Endothelial cell of umbilical vein (primary cell): ENCODE measurements at regions of chr6 and their contacts with region 1.

Region 1: GRCh38 chr6:31795616-31796298 is at the start of gene VARS1:
- DNase-seq: peak; percentile 87
- H3K4me3 ChIP-seq: peak within 1 kb of the TSS; percentile 49 to 71 (median 67)
- H3K27ac ChIP-seq: peak within 1 kb of the TSS; percentile 89
- H3K4me1 ChIP-seq: peaks cover 15% of the 10 kb centered on the region
- H3K27me3 ChIP-seq: no peaks in the 10 kb centered on the region
- CTCF ChIP-seq: peak; percentile 78 to 88
- POLR2A ChIP-seq: no peak
- total RNA-seq, gene VARS1: 121 and 125 TPM in 2 replicates

Region 2: DNA sequence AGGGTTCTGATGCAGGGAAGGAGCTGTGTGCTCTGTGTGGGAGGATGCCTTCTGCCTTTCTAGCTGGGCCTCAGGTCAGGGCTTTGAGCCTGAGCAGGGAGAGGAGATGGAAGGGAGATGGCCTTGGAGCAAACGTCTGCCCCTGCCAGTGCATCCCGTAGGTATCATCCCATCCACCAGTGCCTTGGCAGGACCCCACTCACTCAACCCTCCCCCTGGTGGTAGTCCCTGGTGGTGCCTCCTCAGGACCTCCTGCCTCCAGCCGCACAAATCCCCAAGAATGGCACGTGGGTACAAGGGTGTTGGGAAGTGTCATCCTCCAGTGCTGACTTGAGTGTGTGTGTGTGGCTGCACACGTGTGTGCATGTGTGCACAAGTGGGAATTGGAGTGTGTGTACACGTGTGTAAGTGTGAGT is 320.9 kb before region 1 on chr6:
- CTCF ChIA-PET with region 1: no interaction called
- POLR2A ChIA-PET with region 1: no interaction called
- dilution Hi-C with region 1: no loop called
- intact Hi-C with region 1: no loop called
- DNase-seq: no peak
- H3K4me3 ChIP-seq: no peak overlapping the region
- H3K27ac ChIP-seq: no peak overlapping the region
- H3K4me1 ChIP-seq: no peaks in the 10 kb centered on the region
- H3K27me3 ChIP-seq: peaks cover 6 to 18% of the 10 kb centered on the region in 2 experiments
- CTCF ChIP-seq: peak in 1 of 2 donors; percentile 27
- POLR2A ChIP-seq: no peak

Region 3: DNA sequence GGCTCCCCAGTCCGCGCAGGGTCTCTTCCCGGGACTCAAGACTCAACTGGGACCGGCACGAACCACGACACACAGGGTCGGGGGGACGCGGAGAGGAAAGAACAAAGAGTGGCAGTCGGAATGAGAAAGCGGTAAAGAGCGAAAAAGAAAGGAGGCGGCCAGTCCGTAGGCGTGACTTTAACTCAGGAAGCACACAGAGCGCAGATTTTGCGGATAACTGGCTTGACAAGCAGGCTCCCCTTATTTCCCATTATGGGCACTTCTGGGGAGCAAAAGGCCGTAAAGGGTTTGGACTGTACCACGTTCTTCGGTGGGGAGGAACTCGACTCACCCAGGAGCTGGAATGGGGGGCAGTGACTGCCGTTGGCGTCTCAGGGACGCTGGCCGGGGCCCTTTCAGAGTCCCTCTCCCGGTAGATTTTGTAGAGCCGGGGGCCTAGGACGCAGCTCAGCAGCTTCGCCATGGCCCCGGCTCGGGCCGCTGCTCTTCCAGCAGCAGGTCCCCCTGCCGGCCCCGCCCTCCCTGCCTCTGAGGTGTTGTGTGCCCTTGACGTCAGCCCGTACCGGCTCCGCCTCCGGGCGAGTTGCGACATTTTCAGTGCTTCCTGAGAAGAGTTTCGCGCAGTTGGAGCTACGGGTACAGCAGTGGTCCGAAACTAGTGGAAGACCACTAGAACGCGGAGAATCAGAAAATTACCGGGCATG is 92.8 kb before region 1 on chr6 and contains the start of gene ABHD16A:
- CTCF ChIA-PET with region 1: interaction called, 3 read pairs
- POLR2A ChIA-PET with region 1: no interaction called
- dilution Hi-C with region 1: no loop called
- intact Hi-C with region 1: loop called (anchors 1 kb)
- DNase-seq: peak; percentile 99
- H3K4me3 ChIP-seq: peak within 1 kb of the TSS; percentile 59 to 80 (median 74)
- H3K27ac ChIP-seq: peak within 1 kb of the TSS; percentile 77
- H3K4me1 ChIP-seq: peaks cover 11% of the 10 kb centered on the region
- H3K27me3 ChIP-seq: no peaks in the 10 kb centered on the region
- CTCF ChIP-seq: peak in 1 of 2 donors; percentile 3
- POLR2A ChIP-seq: peak; percentile 97
- total RNA-seq, gene ABHD16A: 41.3 and 48.9 TPM in 2 replicates

Region 4: DNA sequence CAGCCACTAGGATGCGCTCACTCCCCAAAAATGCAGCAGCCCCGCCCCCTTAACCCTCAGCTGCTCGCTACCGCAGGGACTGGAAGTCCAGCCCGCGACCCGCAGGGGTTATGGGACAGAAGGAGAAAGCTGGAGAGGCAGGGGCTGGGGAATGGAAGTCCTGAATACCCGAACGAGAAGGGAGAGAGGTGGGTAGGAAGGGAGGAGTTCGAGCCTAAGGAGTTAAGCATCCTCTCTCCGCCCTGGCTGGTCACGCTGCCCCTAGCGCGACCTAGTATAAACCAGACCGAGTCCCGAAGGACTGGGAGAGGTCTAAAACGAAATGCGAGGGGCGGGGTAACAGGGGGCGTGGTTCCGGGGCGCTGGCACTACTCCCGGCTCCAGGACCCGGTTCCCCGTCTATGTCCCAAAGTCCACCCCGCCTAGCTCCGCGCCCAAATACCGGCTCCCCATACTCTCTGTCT is 66.2 kb before region 1 on chr6:
- CTCF ChIA-PET with region 1: interaction called, 8 read pairs
- POLR2A ChIA-PET with region 1: no interaction called
- dilution Hi-C with region 1: no loop called
- intact Hi-C with region 1: loop called (anchors 1 kb)
- DNase-seq: peak; percentile 90
- H3K4me3 ChIP-seq: peak overlapping the region; percentile 66 to 94 (median 70)
- H3K27ac ChIP-seq: peak overlapping the region; percentile 54
- H3K4me1 ChIP-seq: peaks cover 37% of the 10 kb centered on the region
- H3K27me3 ChIP-seq: no peaks in the 10 kb centered on the region
- CTCF ChIP-seq: peak in 1 of 2 donors; percentile 73
- POLR2A ChIP-seq: no peak

Region 5: GRCh38 chr6:31769684-31770371 is 25.9 kb before region 1 on chr6:
- CTCF ChIA-PET with region 1: interaction called, 61 read pairs
- POLR2A ChIA-PET with region 1: no interaction called
- dilution Hi-C with region 1: no loop called
- intact Hi-C with region 1: loop called (anchors 2 kb)
- DNase-seq: peak; percentile 66
- H3K4me3 ChIP-seq: no peak overlapping the region
- H3K27ac ChIP-seq: no peak overlapping the region
- H3K4me1 ChIP-seq: no peaks in the 10 kb centered on the region
- H3K27me3 ChIP-seq: no peaks in the 10 kb centered on the region
- CTCF ChIP-seq: peak; percentile 83 to 88
- POLR2A ChIP-seq: no peak

Region 6: DNA sequence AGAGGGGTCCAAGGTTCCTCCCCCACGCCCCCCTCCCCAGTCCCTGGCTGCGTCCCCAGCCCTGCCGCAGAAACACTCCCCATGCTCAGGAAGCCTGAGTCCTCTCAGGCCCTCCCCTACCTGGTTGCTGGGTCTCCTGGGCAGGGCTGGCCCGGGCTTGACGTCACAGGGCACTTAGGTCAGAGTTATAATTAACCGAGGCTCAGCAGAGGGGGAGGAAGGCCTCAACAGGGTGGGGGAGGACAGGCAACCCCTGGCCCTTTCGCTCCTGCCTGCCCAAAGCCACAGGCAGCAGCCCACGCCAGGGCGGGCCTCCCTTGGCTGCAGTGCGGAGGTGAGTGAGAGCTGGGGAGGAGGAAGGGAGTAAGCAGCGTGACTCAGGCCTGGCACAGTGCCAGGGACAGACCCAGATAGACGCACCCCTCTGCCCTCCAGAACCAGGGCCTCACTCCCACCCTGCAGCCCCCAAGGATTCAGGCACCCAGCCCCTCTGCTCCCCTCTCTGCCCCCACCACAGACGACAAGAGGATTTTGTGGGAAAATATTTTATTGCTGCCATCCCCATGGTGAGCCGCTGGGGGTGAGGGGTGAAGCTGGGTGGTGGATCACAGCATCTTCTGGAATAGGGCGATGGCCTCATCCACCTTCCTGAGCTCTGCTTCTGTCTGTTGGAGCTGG is 18.6 kb before region 1 on chr6 and contains the start of gene VWA7:
- CTCF ChIA-PET with region 1: interaction called, 61 read pairs
- POLR2A ChIA-PET with region 1: no interaction called
- dilution Hi-C with region 1: no loop called
- intact Hi-C with region 1: loop called (anchors 2 kb)
- DNase-seq: peak; percentile 35
- H3K4me3 ChIP-seq: no peak within 1 kb of the TSS
- H3K27ac ChIP-seq: no peak within 1 kb of the TSS
- H3K4me1 ChIP-seq: peaks cover 4% of the 10 kb centered on the region
- H3K27me3 ChIP-seq: no peaks in the 10 kb centered on the region
- CTCF ChIP-seq: no peak
- POLR2A ChIP-seq: no peak
- total RNA-seq, gene VWA7: 0.25 and 0.51 TPM in 2 replicates

Region 7: GRCh38 chr6:31806465-31807272 is 10.9 kb after region 1 on chr6 and contains the start of gene LSM2:
- CTCF ChIA-PET with region 1: interaction called, 28 read pairs
- POLR2A ChIA-PET with region 1: interaction called, 13 read pairs
- dilution Hi-C with region 1: no loop called
- intact Hi-C with region 1: loop called (anchors 1 kb)
- DNase-seq: peak; percentile 98
- H3K4me3 ChIP-seq: peak within 1 kb of the TSS; percentile 77 to 88 (median 87)
- H3K27ac ChIP-seq: peak within 1 kb of the TSS; percentile 42
- H3K4me1 ChIP-seq: peaks cover 11% of the 10 kb centered on the region
- H3K27me3 ChIP-seq: no peaks in the 10 kb centered on the region
- CTCF ChIP-seq: peak in 1 of 2 donors; percentile 25
- POLR2A ChIP-seq: peak; percentile 94
- total RNA-seq, gene LSM2: 78.1 and 78.6 TPM in 2 replicates

Region 8: DNA sequence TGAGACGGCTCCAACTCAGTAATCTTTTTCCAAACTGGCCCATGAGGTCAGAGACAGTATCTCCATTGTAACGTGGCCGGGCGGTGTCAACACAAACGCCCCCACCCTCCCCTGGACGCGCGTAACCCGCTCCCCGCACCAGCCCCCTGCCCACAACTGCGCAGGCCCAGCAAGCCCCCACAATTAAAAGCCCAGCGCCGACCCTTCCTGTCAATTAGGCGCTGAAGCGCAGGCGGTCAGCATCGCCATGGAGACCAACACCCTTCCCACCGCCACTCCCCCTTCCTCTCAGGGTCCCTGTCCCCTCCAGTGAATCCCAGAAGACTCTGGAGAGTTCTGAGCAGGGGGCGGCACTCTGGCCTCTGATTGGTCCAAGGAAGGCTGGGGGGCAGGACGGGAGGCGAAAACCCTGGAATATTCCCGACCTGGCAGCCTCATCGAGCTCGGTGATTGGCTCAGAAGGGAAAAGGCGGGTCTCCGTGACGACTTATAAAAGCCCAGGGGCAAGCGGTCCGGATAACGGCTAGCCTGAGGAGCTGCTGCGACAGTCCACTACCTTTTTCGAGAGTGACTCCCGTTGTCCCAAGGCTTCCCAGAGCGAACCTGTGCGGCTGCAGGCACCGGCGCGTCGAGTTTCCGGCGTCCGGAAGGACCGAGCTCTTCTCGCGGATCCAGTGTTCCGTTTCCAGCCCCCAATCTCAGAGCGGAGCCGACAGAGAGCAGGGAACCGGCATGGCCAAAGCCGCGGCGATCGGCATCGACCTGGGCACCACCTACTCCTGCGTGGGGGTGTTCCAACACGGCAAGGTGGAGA is 19.5 kb after region 1 on chr6 and contains the starts of genes HSPA1A and HSPA1L:
- CTCF ChIA-PET with region 1: interaction called, 18 read pairs
- POLR2A ChIA-PET with region 1: interaction called, 6 read pairs
- dilution Hi-C with region 1: no loop called
- intact Hi-C with region 1: loop called (anchors 2 kb)
- DNase-seq: peak; percentile 97
- H3K4me3 ChIP-seq: peak within 1 kb of the TSS; percentile 42 to 84 (median 83)
- H3K27ac ChIP-seq: peak within 1 kb of the TSS; percentile 71
- H3K4me1 ChIP-seq: peaks cover 21% of the 10 kb centered on the region
- H3K27me3 ChIP-seq: no peaks in the 10 kb centered on the region
- CTCF ChIP-seq: no peak
- POLR2A ChIP-seq: peak; percentile 99
- total RNA-seq, gene HSPA1A: 55.6 and 58.3 TPM in 2 replicates
- total RNA-seq, gene HSPA1L: 0.74 and 0.77 TPM in 2 replicates